Esophagus muscularis mucosa (tissue), 4 donors: ENCODE measurements at regions of chr1 and their contacts with region 1.

Region 1: GRCh38 chr1:9629445-9630201 is 21.9 kb upstream of the PIK3CD start:
- DNase-seq: no peak
- H3K4me3 ChIP-seq: peak overlapping the region in 2 of 4 donors; percentile 3 to 12
- H3K27ac ChIP-seq: no peak overlapping the region
- H3K4me1 ChIP-seq: peaks cover 3 to 16% (median 13%) of the 10 kb centered on the region in 4 donors
- H3K27me3 ChIP-seq: peaks cover 0 to 12% (median 0%) of the 10 kb centered on the region in 4 donors
- CTCF ChIP-seq: no peak
- EP300 ChIP-seq: no peak
- POLR2A ChIP-seq: no peak

Region 2: GRCh38 chr1:9689011-9689706 is 59.5 kb after region 1 on chr1:
- intact Hi-C with region 1: loop called (anchors 5 kb)
- DNase-seq: no peak
- H3K4me3 ChIP-seq: peak overlapping the region; percentile 75 to 92 (median 84)
- H3K27ac ChIP-seq: peak overlapping the region; percentile 64 to 78 (median 74)
- H3K4me1 ChIP-seq: peaks cover 28 to 47% (median 37%) of the 10 kb centered on the region in 4 donors
- H3K27me3 ChIP-seq: no peaks in the 10 kb centered on the region
- CTCF ChIP-seq: no peak
- EP300 ChIP-seq: no peak
- POLR2A ChIP-seq: no peak

Region 3: GRCh38 chr1:10045480-10046355 is 416.1 kb after region 1 on chr1:
- intact Hi-C with region 1: no loop called
- DNase-seq: no peak
- H3K4me3 ChIP-seq: peak overlapping the region in 1 of 4 donors; percentile 3
- H3K27ac ChIP-seq: peak overlapping the region; percentile 67 to 78 (median 72)
- H3K4me1 ChIP-seq: peaks cover 47 to 87% (median 69%) of the 10 kb centered on the region in 4 donors
- H3K27me3 ChIP-seq: no peaks in the 10 kb centered on the region
- CTCF ChIP-seq: no peak
- EP300 ChIP-seq: no peak
- POLR2A ChIP-seq: no peak